Adrenal gland (tissue), 19 donors: ENCODE measurements at regions of chr1 and their contacts with region 1.

Region 1: GRCh38 chr1:147242439-147243227 is at the start of gene CHD1L:
- DNase-seq: peak; percentile 95 to 98 (median 96)
- H3K4me3 ChIP-seq: peak within 1 kb of the TSS; percentile 36 to 93 (median 77)
- H3K27ac ChIP-seq: peak within 1 kb of the TSS; percentile 58 to 96 (median 90)
- H3K4me1 ChIP-seq: peaks cover 0 to 25% of the 10 kb centered on the region in 2 donors
- H3K27me3 ChIP-seq: no peaks in the 10 kb centered on the region
- CTCF ChIP-seq: peak; percentile 52 to 98 (median 84)
- POLR2A ChIP-seq: peak in 1 of 2 donors; percentile 72
- total RNA-seq, gene CHD1L: 11.8 to 28.9 (median 22.5) TPM

Region 2: GRCh38 chr1:147172168-147172992 is 70.3 kb before region 1 on chr1 and contains the start of gene PRKAB2:
- intact Hi-C with region 1: loop called (anchors 2 to 5 kb)
- DNase-seq: peak; percentile 95 to 98 (median 97)
- H3K4me3 ChIP-seq: peak within 1 kb of the TSS; percentile 59 to 87 (median 83)
- H3K27ac ChIP-seq: peak within 1 kb of the TSS; percentile 65 to 96 (median 94)
- H3K4me1 ChIP-seq: peaks cover 17 to 53% of the 10 kb centered on the region in 2 donors
- H3K27me3 ChIP-seq: no peaks in the 10 kb centered on the region
- CTCF ChIP-seq: peak; percentile 61 to 98 (median 90)
- POLR2A ChIP-seq: peak; percentile 83 to 96
- total RNA-seq, gene PRKAB2: 9.3 to 53.8 (median 14.4) TPM

Region 3: GRCh38 chr1:147434921-147435320 is 192.3 kb after region 1 on chr1:
- intact Hi-C with region 1: no loop called
- DNase-seq: no peak
- H3K4me3 ChIP-seq: no peak overlapping the region
- H3K27ac ChIP-seq: no peak overlapping the region
- H3K4me1 ChIP-seq: no peaks in the 10 kb centered on the region
- H3K27me3 ChIP-seq: no peaks in the 10 kb centered on the region
- CTCF ChIP-seq: no peak
- POLR2A ChIP-seq: no peak